ENCODE measurements at regions of chr2 and their contacts with region 1.

Region 1: DNA sequence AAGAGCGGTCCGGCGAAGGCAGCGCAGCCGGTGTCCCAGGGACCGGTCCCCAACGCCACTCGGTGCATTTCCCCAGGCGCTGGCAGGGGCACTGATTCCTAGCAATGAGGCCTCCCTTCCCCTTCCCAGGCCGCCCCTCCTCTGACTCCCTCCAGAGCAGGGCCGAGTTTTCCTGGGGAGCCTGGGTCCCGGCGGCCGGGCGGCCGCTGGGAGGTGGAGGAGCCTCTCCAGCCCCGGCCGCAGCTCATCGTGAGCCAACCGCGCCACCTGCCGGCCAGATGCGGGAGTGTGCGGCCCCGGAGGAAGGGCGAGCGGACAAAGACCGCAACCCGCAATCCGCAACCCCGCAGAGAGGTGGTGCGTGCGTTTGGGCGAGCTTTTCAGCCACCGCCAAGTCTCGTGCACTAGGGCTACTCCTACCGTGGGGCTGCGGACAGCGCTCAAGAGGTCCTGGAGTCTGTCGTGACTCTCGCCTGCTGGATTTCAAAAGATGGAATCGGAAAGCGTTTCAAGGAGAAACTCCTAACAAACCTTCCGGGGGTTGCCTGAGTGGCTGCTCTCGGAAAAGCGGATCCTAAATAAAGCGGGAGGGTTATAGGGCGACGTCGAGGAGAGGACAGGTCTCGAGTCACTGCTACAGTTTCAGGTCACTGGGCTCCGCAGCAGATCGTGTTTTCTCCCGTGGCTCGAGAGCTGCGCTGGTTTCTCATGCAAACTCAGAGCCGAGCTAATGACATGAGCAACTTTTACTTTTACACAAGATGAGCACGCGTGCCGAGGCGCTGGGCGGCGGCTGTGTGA is 1.5 kb upstream of the EPHA4 start:
- DNase-seq: peak; percentile 81 to 92 (median 86)
- ATAC-seq: peak; percentile 69 to 85 (median 82)
- H3K4me3 ChIP-seq: peak overlapping the region; percentile 58 to 89 (median 76)
- H3K27ac ChIP-seq: peak overlapping the region; percentile 72 to 94 (median 86)
- H3K4me1 ChIP-seq: peaks cover 0 to 38% (median 16%) of the 10 kb centered on the region in 12 donors
- H3K27me3 ChIP-seq: peaks cover 0 to 53% (median 2%) of the 10 kb centered on the region in 9 donors
- CTCF ChIP-seq: peak; percentile 93 to 99 (median 98)
- POLR2A ChIP-seq: no peak

Region 2: GRCh38 chr2:219997341-219997851 is 1576.2 kb before region 1 on chr2:
- intact Hi-C with region 1: loop called in 1 of 10 experiments (anchors 2 kb)
- DNase-seq: peak in 3 of 5 donors; percentile 24 to 26 (median 25)
- ATAC-seq: peak in 1 of 4 donors; percentile 32
- H3K4me3 ChIP-seq: no peak overlapping the region
- H3K27ac ChIP-seq: no peak overlapping the region
- H3K4me1 ChIP-seq: peaks cover 0 to 3% (median 0%) of the 10 kb centered on the region in 12 donors
- H3K27me3 ChIP-seq: no peaks in the 10 kb centered on the region
- CTCF ChIP-seq: peak in 9 of 12 donors; percentile 12 to 47 (median 35)
- POLR2A ChIP-seq: no peak

Region 3: DNA sequence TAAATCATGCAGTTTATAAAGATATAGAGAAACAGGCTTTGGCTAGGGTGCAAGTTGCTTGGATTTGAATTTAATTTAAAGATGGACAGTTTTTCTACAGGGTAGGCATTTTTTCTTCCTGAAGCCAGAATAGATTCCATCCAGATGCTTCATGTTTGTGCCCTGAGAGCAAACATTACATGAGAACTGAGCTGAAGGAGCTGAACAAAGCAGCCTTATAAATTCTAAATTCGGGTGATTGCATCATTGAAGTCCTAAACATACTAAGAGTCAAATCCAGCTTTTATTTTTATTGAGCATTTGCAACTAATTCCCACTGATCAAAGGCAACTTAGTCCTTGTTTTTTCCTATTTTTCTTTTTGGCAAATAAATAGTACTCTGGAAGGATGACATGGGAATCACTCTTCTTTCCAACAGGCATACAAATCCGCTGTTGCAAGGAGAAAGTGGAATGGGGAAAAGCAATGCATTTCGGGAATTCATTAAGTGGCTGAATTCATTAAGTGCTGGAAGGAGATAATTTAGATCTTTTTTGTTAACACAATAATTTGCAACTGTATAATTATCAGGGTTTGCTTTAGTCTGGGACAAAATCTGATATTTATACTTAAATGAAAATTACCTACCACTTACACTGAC is 1118.2 kb before region 1 on chr2:
- intact Hi-C with region 1: loop called in 1 of 10 experiments (anchors 10 kb)
- DNase-seq: no peak
- ATAC-seq: no peak
- H3K4me3 ChIP-seq: no peak overlapping the region
- H3K27ac ChIP-seq: no peak overlapping the region
- H3K4me1 ChIP-seq: peaks cover 0 to 5% (median 0%) of the 10 kb centered on the region in 12 donors
- H3K27me3 ChIP-seq: no peaks in the 10 kb centered on the region
- CTCF ChIP-seq: no peak
- POLR2A ChIP-seq: no peak

Region 4: DNA sequence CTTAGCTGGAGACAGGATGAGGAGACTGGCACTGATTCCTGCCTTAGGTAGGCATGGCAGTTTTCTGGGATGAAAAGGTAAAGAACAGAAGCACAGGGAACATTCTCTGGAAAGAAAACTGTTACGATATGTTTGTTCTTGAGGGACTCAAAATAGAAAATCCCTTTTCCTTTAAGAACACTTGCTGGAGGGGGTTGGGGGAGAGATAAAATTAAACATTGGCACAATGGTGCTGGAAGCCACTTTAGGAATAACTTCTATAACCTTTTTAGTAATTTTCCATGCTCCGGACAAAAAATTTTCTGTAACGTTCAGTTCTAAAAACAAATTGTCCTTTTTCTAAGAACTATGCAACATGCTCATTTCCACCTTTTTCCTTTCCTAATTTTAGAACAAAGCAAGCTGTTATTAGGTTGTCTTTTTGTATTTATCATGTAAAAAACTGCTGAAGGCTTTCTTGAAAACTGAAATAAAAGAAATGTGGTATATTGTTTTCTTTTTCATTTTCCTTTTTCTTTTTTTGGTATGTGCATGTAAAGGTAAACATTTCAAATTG is 345.3 kb before region 1 on chr2:
- intact Hi-C with region 1: loop called in 2 of 10 experiments (anchors 5 kb)
- DNase-seq: peak in 1 of 5 donors; percentile 9
- ATAC-seq: peak in 3 of 4 donors; percentile 22 to 58 (median 34)
- H3K4me3 ChIP-seq: no peak overlapping the region
- H3K27ac ChIP-seq: peak overlapping the region; percentile 4 to 75 (median 44)
- H3K4me1 ChIP-seq: peaks cover 0 to 24% (median 5%) of the 10 kb centered on the region in 12 donors
- H3K27me3 ChIP-seq: no peaks in the 10 kb centered on the region
- CTCF ChIP-seq: no peak
- POLR2A ChIP-seq: no peak

Region 5: DNA sequence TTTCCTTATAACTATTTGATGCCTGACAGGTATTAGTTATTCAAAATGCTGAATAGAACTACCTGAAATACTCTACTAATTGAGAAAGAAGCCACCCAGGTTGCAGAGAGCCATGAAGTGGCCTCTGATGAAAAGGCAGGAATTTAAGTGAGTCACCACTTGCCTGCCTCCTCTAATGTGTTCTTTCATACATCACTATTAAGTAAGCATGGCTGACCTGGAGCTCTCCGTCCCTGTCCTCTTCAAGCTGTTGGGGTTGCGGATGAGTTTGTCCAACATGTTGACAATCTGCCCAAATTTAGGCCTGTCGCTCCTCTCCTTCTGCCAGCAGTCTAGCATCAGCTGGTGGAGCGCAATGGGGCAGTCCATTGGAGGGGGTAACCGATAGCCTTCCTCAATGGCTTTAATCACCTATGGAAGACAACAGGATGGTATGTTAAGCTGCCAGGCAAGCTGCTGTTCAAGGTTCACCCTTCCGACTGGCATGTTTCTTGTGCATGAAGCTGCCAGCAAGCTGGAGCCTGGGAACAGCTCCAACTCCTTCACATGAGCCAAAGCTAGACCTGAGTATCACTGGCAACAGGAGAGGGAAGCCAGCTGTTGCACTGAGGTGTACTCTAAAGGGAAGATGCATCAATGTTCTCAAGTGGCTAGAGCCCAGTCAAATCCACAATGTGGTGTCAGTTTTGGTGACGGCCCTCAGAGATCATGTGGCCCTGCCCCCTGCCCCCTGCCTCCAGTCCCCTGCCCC is 143.7 kb before region 1 on chr2:
- intact Hi-C with region 1: loop called in 1 of 10 experiments (anchors 5 kb)
- DNase-seq: peak in 4 of 5 donors; percentile 28 to 65 (median 62)
- ATAC-seq: peak in 3 of 4 donors; percentile 69 to 87 (median 85)
- H3K4me3 ChIP-seq: no peak overlapping the region
- H3K27ac ChIP-seq: no peak overlapping the region
- H3K4me1 ChIP-seq: peaks cover 0 to 5% (median 0%) of the 10 kb centered on the region in 12 donors
- H3K27me3 ChIP-seq: no peaks in the 10 kb centered on the region
- CTCF ChIP-seq: no peak
- POLR2A ChIP-seq: no peak

Region 6: GRCh38 chr2:221529943-221530652 is 43.5 kb before region 1 on chr2:
- intact Hi-C with region 1: loop called in 1 of 10 experiments (anchors 5 kb)
- DNase-seq: no peak
- ATAC-seq: peak in 2 of 4 donors; percentile 23 to 32
- H3K4me3 ChIP-seq: peak overlapping the region in 2 of 12 donors; percentile 18 to 19
- H3K27ac ChIP-seq: peak overlapping the region; percentile 3 to 83 (median 64)
- H3K4me1 ChIP-seq: peaks cover under 1 to 71% (median 38%) of the 10 kb centered on the region in 12 donors
- H3K27me3 ChIP-seq: no peaks in the 10 kb centered on the region
- CTCF ChIP-seq: no peak
- POLR2A ChIP-seq: no peak

Region 7: GRCh38 chr2:222076973-222077691 is 503.5 kb after region 1 on chr2:
- intact Hi-C with region 1: no loop called
- DNase-seq: no peak
- ATAC-seq: no peak
- H3K4me3 ChIP-seq: no peak overlapping the region
- H3K27ac ChIP-seq: no peak overlapping the region
- H3K4me1 ChIP-seq: no peaks in the 10 kb centered on the region
- H3K27me3 ChIP-seq: peaks cover 0 to 33% (median 3%) of the 10 kb centered on the region in 9 donors
- CTCF ChIP-seq: no peak
- POLR2A ChIP-seq: no peak